PC-3 (cell line): ENCODE measurements at regions of chr18 and their contacts with region 1.

Region 1: DNA sequence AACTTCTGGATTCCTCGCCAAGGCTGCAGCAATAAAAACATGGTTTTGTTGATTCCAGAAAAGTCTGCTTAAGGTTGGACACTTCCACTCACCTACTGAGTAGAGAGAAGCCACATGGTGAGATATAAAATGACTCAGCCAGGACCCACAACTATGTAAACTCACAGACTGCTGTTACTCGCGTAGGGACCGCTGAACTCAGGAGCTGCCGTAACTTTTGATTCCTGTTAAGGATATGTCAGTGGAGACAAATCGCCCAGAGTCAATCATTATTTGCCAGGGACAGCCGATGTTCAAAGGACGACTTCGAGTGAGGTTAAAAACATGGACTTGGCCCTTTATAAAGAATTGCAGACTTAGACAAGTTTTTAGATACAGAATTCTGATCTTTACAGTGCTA is 25.6 kb downstream of the CYB5A start:
- DNase-seq: peak; percentile 90
- ATAC-seq: peak; percentile 100
- H3K4me3 ChIP-seq: peak overlapping the region; percentile 58
- H3K27ac ChIP-seq: peak overlapping the region; percentile 57
- H3K4me1 ChIP-seq: peaks cover 24% of the 10 kb centered on the region
- H3K27me3 ChIP-seq: no peaks in the 10 kb centered on the region
- CTCF ChIP-seq: no peak

Region 2: DNA sequence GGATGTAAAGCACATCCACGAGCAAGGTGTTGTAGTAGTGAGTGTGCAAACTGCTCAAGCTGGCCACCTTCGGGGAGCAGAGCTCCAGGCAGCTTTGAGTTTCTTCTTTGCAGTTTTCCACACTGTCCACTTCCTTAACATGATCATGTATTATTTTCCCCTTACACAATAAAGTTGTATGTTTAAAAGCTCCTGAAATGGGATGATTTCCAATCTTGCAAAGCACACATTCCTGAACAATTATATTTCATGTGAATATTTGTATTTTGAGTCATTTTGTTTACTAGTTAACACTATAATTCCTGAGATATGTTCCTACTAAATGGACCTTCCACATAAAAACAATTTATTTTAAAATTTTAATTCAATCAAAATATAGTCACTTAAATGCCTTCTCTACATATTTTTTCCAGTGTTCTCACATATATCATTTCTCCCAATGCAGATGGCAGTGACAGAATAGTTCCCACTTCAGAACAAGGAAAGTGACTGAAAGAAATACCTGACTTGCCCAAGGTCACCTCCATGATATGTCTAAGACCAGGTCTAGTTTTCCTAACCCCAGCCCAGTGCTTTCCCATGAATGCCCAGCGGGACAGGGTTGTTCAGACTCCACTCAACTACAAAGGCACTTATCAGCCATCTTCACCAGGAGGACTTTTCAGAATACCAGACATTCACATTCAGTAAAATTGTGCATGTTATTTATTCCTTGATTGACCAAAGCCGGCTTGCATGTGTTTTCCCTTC is 20.1 kb after region 1 on chr18:
- CTCF ChIA-PET with region 1: no interaction called
- POLR2A ChIA-PET with region 1: no interaction called
- intact Hi-C with region 1: loop called (anchors 2 kb)
- DNase-seq: peak; percentile 61
- ATAC-seq: peak; percentile 19
- H3K4me3 ChIP-seq: peak overlapping the region; percentile 16; the same call in 1 of the 2 replicates
- H3K27ac ChIP-seq: peak overlapping the region; percentile 27
- H3K4me1 ChIP-seq: peaks cover 78% of the 10 kb centered on the region
- H3K27me3 ChIP-seq: no peaks in the 10 kb centered on the region
- CTCF ChIP-seq: no peak